ENCODE measurements at regions of chr9 and their contacts with region 1.

Region 1: DNA sequence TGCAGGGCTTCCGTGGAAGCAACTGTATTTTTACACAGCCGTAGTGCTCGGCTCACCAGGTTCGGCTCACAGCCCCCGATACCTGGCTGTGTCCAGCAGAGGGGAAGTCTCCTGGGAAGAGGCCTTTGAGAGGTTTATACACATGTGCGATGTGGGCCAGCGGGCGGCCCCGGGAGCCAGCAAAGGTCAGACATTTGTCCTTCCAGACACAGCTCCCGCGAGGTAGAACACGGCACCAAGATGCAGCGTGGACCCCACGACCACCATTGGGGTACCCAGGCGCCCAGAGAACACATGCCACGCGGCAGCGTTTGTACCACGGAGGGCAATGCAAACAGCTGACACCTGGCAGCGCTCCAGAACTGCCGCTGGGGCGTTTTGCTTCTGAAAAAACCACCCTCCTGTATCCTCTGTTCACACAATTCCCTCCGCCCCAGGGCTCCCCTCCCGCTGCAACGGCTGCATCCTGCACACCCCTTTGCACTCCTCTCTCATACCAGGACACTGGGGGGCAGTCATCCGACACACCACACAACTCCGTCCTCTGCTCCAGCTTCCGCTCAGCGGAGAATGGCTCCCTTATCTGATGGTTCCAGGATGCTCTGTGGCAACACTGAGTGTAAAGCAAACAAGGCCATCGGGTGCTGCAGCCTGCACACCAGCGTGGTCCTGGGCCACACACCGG is 235.3 kb downstream of the SYK start:
- DNase-seq: peak; percentile 93
- H3K4me3 Mint-ChIP-seq: peak overlapping the region; percentile 53
- H3K27ac Mint-ChIP-seq: peak overlapping the region; percentile 90
- H3K4me1 Mint-ChIP-seq: peaks cover 58% of the 10 kb centered on the region
- H3K27me3 Mint-ChIP-seq: peaks cover under 1% of the 10 kb centered on the region

Region 2: GRCh38 chr9:90914868-90915483 is 122.0 kb before region 1 on chr9:
- intact Hi-C with region 1: loop called (anchors 5 kb)
- DNase-seq: peak; percentile 91
- H3K4me3 Mint-ChIP-seq: no peak overlapping the region
- H3K27ac Mint-ChIP-seq: peak overlapping the region; percentile 73
- H3K4me1 Mint-ChIP-seq: peaks cover 6% of the 10 kb centered on the region
- H3K27me3 Mint-ChIP-seq: no peaks in the 10 kb centered on the region

Region 3: GRCh38 chr9:90925581-90926257 is 111.2 kb before region 1 on chr9:
- intact Hi-C with region 1: no loop called
- DNase-seq: no peak
- H3K4me3 Mint-ChIP-seq: no peak overlapping the region
- H3K27ac Mint-ChIP-seq: no peak overlapping the region
- H3K4me1 Mint-ChIP-seq: no peaks in the 10 kb centered on the region
- H3K27me3 Mint-ChIP-seq: peaks cover 13% of the 10 kb centered on the region

Region 4: DNA sequence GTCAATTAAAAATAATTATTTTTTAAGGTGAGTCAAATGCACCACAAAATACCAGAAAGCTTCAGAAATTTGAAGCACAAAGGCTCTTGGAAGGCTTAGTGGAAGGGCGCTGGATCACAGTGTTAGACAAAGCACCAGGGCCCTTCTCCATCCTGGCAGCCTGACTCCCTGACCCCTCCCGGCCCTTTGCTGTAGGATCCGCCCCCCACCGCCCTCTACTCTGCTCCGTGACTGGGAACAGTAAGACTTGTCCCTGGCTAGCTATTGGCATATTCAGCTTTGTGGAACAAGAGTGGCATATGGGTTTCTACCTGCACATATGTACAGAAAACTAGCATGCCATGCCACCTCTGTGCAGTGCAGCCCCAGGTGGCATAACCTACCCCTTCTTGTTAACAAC is 13.2 kb before region 1 on chr9:
- intact Hi-C with region 1: no loop called
- DNase-seq: peak; percentile 44
- H3K4me3 Mint-ChIP-seq: no peak overlapping the region
- H3K27ac Mint-ChIP-seq: no peak overlapping the region
- H3K4me1 Mint-ChIP-seq: peaks cover 5% of the 10 kb centered on the region
- H3K27me3 Mint-ChIP-seq: peaks cover 13% of the 10 kb centered on the region

Region 5: DNA sequence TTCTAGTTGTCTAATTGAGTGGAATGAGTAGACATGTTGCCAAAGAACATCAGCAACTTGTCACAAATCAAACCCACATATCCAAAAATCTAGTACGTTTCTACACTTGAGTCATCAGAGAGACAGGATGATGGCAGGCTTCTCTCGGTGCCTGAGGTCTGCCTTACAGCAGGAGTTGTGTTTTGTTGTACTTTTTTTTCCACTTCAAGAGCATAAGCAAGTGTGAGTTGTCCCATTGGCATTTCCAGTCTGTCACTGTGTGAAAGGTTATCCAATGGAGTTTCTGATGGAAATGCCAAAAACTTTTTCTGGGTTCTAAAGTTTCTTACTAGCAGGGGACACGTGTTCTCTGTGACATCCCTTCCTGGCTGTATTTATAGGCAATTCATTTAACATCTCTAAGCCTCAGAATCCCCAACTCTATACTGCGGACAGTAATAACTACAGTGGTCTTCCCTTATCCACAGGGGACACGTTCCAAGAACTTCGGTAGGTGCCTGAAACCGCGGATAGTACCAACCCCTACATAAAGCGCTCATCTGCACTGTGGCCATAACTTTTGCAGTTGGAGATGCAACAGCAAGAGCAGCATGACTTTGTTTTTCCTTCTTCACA is 11.1 kb after region 1 on chr9:
- intact Hi-C with region 1: loop called (anchors 1 kb)
- DNase-seq: peak; percentile 83
- H3K4me3 Mint-ChIP-seq: peak overlapping the region; percentile 72
- H3K27ac Mint-ChIP-seq: peak overlapping the region; percentile 93
- H3K4me1 Mint-ChIP-seq: peaks cover 64% of the 10 kb centered on the region
- H3K27me3 Mint-ChIP-seq: no peaks in the 10 kb centered on the region

Region 6: DNA sequence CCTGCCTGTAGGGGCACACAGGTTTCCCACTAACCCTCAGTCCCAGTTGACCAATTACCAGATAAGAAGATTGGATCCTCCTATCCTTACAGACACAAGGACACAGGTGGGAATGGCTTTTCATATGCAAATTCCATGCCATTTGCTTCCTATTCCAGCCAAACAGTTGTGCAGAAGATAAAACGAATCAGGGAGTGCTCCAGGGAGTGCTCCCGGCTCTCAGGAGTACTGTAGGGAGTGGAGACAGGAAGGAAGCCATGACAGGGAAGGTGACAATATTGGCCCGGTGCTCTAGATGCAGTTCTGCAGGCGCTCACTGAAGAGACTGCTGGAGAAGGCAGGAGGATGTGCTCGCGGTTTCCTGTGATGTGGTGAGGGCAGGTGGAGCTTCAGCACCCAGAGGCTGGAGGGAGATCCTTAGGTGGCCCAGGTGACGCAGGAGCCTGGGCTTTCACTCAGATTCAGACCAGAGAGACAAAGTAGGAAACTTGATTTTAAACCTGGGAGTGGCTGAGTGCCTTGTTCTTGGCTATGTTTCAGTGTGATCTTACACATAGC is 64.7 kb after region 1 on chr9:
- intact Hi-C with region 1: loop called (anchors 2 kb)
- DNase-seq: peak; percentile 97
- H3K4me3 Mint-ChIP-seq: peak overlapping the region; percentile 70
- H3K27ac Mint-ChIP-seq: peak overlapping the region; percentile 89
- H3K4me1 Mint-ChIP-seq: peaks cover 67% of the 10 kb centered on the region
- H3K27me3 Mint-ChIP-seq: no peaks in the 10 kb centered on the region

Region 7: DNA sequence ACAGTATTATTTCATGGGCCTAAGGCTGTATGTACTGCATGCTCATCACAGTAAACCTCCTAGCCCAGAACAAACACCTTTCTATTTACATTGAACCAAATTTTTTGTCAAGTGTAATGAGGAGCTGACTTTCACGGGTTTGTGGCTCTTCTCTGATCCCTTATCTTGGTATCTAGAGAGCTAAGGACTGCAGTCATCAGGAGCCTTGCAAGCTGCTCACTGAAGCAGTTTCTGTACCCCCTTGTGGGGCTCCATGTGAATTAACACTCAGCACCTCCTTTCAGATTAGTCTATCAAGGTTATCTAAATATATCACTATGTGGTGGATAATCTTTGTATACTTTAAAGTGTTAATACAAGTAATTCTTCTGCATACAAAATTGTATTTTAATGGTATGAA is 216.5 kb after region 1 on chr9:
- intact Hi-C with region 1: loop called (anchors 2 kb)
- DNase-seq: peak; percentile 88
- H3K4me3 Mint-ChIP-seq: no peak overlapping the region
- H3K27ac Mint-ChIP-seq: no peak overlapping the region
- H3K4me1 Mint-ChIP-seq: peaks cover 41% of the 10 kb centered on the region
- H3K27me3 Mint-ChIP-seq: no peaks in the 10 kb centered on the region

Region 8: DNA sequence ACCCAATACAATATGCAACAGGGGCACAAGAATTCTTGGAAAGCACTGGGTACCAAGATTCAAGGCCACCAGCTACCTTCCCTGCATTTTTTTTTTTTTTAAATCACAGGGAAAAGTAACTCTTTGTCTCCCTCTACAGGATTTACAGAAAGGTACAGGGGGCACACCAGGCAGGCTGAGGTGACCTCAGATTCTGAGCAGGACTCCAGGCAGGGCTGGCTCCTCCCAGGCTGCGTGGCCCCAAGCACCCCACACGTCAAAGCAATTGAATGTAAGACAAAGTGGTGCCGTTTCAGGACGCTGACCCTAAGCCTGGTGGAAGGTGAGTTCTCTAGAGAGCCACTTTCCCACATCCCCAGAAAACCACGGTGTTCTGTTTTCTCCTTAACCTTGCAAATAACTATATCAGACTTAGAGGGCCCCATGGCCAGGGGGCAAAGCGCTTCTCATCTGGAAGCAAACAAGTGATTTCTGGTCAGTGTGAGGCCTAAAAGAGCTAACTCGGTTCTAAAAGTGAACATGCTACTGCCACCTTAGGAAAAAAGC is 690.4 kb after region 1 on chr9:
- intact Hi-C with region 1: loop called (anchors 5 kb)
- DNase-seq: peak; percentile 80
- H3K4me3 Mint-ChIP-seq: no peak overlapping the region
- H3K27ac Mint-ChIP-seq: no peak overlapping the region
- H3K4me1 Mint-ChIP-seq: no peaks in the 10 kb centered on the region
- H3K27me3 Mint-ChIP-seq: peaks cover 2% of the 10 kb centered on the region

Measured in activated CD4-positive, alpha-beta T cell treated with anti-CD3 and anti-CD28 coated beads, Interleukin-2, amount 10 ng/mL, durations not matched to agents 24 days and 14 days (primary cell).